GM12878 (cell line): ENCODE measurements at regions of chr6 and their contacts with region 1.

Region 1: GRCh38 chr6:129730477-129731165 is 20.6 kb upstream of the ARHGAP18 start:
- DNase-seq: no peak
- ATAC-seq: peak; percentile 87
- H3K4me3 ChIP-seq: no peak overlapping the region
- H3K27ac ChIP-seq: peak overlapping the region; percentile 43; the same call in 1 of the 2 replicates
- H3K4me1 ChIP-seq: no peaks in the 10 kb centered on the region
- H3K27me3 ChIP-seq: no peaks in the 10 kb centered on the region
- CTCF ChIP-seq: peak; percentile 57 to 70 (median 65)
- EP300 ChIP-seq: no peak
- POLR2A ChIP-seq: no peak
- RAD21 ChIP-seq: peak; percentile 96

Region 2: DNA sequence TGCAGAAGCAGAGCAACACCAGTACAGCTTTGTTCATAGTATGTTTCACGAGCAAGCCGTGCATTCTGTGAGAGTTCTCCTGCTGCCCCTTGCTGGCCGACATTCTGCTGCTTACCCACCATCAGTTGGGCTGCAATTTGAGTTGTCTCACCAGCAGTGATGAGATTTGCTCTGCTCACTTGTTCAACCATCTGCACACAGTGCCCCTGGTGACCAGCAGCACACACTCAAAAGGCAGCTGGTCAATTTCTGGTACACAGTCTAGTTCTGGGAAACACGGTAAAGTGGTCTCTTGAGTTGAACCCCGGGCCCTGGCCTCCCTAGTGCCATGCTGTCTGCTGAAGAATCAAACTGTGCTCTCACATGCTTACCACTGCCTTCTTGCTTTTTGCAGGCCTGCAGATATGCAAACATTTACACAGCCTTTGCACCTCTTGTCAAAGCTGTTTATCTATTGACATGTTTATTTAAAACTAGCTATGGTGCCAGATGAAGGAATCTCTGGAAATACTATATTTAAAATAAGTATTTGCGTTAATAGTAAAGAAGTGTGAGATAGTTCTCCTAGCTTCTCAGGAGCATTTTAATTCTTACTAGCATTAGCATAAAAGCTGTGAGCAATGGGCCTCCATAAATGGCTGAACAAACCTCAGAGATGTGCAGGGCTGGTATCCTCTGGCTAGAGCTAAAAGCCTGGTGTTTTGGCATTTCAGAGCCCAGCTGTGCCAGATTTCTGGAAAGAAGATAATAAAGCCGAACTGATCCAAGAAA is 255.0 kb before region 1 on chr6:
- CTCF ChIA-PET with region 1: no interaction called
- POLR2A ChIA-PET with region 1: no interaction called
- RAD21 ChIA-PET with region 1: no interaction called
- SMC1A ChIA-PET with region 1: no interaction called
- in situ Hi-C with region 1: no loop called
- intact Hi-C with region 1: no loop called
- DNase-seq: no peak
- ATAC-seq: no peak
- H3K4me3 ChIP-seq: no peak overlapping the region
- H3K27ac ChIP-seq: no peak overlapping the region
- H3K4me1 ChIP-seq: no peaks in the 10 kb centered on the region
- H3K27me3 ChIP-seq: no peaks in the 10 kb centered on the region; a peak in 2 of 4 replicates
- CTCF ChIP-seq: no peak
- EP300 ChIP-seq: no peak
- POLR2A ChIP-seq: no peak
- RAD21 ChIP-seq: no peak

Region 3: DNA sequence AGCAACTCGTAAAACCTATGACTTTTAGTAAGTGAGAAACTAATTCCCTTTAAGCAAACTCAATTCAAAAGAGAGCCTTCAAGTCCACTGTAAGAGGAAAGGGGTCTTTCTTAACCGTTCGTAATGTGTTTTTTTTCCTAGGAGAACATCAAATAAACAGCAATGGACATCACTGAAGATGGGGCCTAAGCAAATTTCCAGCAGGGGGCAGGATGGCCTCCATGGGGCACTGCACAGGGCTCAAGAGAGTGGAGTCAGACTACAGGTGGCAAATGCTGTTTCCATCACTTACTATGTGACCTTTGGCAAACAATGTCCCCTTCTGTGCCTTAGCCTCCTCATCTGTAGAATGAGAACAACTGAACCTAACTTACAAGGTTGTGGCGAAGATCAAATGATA is 109.4 kb before region 1 on chr6:
- CTCF ChIA-PET with region 1: interaction called, 4 read pairs
- POLR2A ChIA-PET with region 1: no interaction called
- RAD21 ChIA-PET with region 1: interaction called, 14 read pairs
- SMC1A ChIA-PET with region 1: interaction called, 7 read pairs
- in situ Hi-C with region 1: no loop called
- intact Hi-C with region 1: no loop called
- DNase-seq: no peak
- ATAC-seq: peak; percentile 74
- H3K4me3 ChIP-seq: no peak overlapping the region
- H3K27ac ChIP-seq: no peak overlapping the region
- H3K4me1 ChIP-seq: no peaks in the 10 kb centered on the region
- H3K27me3 ChIP-seq: no peaks in the 10 kb centered on the region
- CTCF ChIP-seq: peak; percentile 29 to 50 (median 37); a peak in 4 of 6 replicates
- EP300 ChIP-seq: no peak
- POLR2A ChIP-seq: no peak
- RAD21 ChIP-seq: 0 out of 2 replicates have a peak, but pooled peaks have one; percentile 7

Region 4: GRCh38 chr6:129661536-129662405 is 68.8 kb before region 1 on chr6:
- CTCF ChIA-PET with region 1: interaction called, 10 read pairs
- POLR2A ChIA-PET with region 1: interaction called, 7 read pairs
- RAD21 ChIA-PET with region 1: interaction called, 10 read pairs
- SMC1A ChIA-PET with region 1: interaction called, 12 read pairs
- in situ Hi-C with region 1: no loop called
- intact Hi-C with region 1: no loop called
- DNase-seq: no peak
- ATAC-seq: peak; percentile 40
- H3K4me3 ChIP-seq: peak overlapping the region; percentile 7; the same call in 1 of the 2 replicates
- H3K27ac ChIP-seq: peak overlapping the region; percentile 89
- H3K4me1 ChIP-seq: peaks cover 44% of the 10 kb centered on the region
- H3K27me3 ChIP-seq: no peaks in the 10 kb centered on the region
- CTCF ChIP-seq: no peak
- EP300 ChIP-seq: peak in 1 of 2 experiments; percentile 61; a peak in 1 of 4 replicates
- POLR2A ChIP-seq: no peak
- RAD21 ChIP-seq: no peak

Region 5: DNA sequence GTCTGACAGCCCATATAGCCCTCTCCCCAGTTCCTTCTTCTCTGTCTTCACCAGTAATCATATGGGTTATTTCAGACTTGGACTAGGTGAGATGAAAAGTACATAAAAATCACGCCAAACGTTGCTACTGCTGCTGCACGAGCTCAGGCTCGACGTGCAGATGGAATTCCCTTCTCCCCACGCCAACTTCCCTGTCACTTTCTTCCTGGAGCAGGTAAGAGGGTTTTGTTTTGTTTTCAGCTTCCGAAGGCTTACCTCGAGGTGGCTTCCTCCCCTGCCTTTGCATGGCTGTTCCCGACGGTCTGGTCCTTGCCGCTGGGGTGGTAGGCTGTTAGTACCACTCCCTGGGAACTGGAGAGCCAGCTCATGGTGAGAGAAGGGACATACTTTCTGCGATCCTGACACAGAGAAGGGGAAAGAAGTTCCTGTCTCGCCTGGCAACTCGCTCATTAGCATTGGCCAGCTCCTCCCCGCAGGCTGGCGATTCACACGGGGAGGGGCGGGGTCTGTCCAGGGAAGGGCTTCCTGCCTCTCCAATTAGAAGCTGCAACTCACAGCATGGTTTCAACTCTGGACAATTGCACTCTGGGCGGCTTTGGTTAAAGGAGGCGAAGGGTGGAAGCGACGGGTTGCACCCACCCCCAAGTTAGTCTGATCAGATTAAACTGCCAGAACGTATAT is 20.7 kb before region 1 on chr6 and contains the start of gene ARHGAP18:
- CTCF ChIA-PET with region 1: interaction called, 36 read pairs
- POLR2A ChIA-PET with region 1: interaction called, 4 read pairs
- RAD21 ChIA-PET with region 1: interaction called, 9 read pairs
- SMC1A ChIA-PET with region 1: interaction called, 247 read pairs
- in situ Hi-C with region 1: no loop called
- intact Hi-C with region 1: no loop called
- DNase-seq: peak; percentile 78
- ATAC-seq: peak; percentile 92
- H3K4me3 ChIP-seq: peak within 1 kb of the TSS; percentile 94
- H3K27ac ChIP-seq: peak within 1 kb of the TSS; percentile 73
- H3K4me1 ChIP-seq: peaks cover 17% of the 10 kb centered on the region
- H3K27me3 ChIP-seq: no peaks in the 10 kb centered on the region
- CTCF ChIP-seq: no peak
- EP300 ChIP-seq: no peak
- POLR2A ChIP-seq: peak; percentile 77
- RAD21 ChIP-seq: no peak
- polyA plus RNA-seq, gene ARHGAP18: 24.9 to 28.0 TPM

Region 6: DNA sequence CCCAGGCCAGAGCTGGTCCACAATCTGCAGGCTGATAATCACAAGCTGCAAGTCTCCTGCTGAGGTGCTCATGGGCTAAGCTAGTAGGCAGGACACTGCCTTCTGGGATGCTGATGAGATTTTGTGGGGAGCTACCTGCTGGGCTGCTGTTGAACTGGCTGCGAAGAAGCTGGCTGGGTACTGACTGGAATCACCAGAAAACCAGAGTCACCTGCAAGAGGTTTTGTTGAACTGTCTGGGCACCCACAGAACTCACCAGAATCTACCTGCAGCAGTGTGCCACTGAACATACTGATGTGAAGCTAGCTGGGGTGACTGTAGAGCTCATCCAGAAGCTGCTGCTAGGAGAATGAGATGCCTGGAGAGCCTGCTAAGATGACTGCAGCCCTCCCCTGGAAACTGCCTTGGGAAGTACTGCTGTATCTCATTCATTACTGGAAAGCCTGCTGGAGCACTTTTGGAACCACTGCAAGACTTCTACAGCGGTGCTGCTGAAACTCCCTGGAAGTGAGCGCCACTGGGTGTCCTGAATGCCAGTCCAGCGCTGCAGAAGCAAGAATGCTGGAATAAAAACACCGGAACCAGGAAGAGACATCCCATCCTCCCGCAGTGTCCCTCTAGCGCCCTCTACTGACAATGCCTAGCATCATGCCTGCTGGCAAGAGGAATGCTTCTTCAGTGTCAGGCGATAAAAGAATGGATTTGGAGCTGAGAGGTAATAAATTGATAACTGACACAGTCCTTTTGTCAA is 44.3 kb after region 1 on chr6:
- CTCF ChIA-PET with region 1: interaction called, 19 read pairs
- POLR2A ChIA-PET with region 1: no interaction called
- RAD21 ChIA-PET with region 1: interaction called, 5 read pairs
- SMC1A ChIA-PET with region 1: interaction called, 8 read pairs
- in situ Hi-C with region 1: no loop called
- intact Hi-C with region 1: no loop called
- DNase-seq: no peak
- ATAC-seq: peak; percentile 72
- H3K4me3 ChIP-seq: no peak overlapping the region
- H3K27ac ChIP-seq: no peak overlapping the region
- H3K4me1 ChIP-seq: no peaks in the 10 kb centered on the region
- H3K27me3 ChIP-seq: no peaks in the 10 kb centered on the region
- CTCF ChIP-seq: peak; percentile 70 to 88 (median 80)
- EP300 ChIP-seq: no peak
- POLR2A ChIP-seq: no peak
- RAD21 ChIP-seq: peak; percentile 63